CD4-positive, alpha-beta T cell (primary cell): ENCODE measurements at regions of chr10 and their contacts with region 1.

Region 1: GRCh38 chr10:101031128-101031795 is at the starts of genes PDZD7 and SFXN3:
- DNase-seq: peak; percentile 94 to 98 (median 97)
- ATAC-seq: peak; percentile 76
- H3K4me3 ChIP-seq: peak within 1 kb of the TSS; percentile 99
- H3K4me3 Mint-ChIP-seq: peak within 1 kb of the TSS; percentile 95
- H3K27ac ChIP-seq: peak within 1 kb of the TSS; percentile 93 to 97
- H3K27ac Mint-ChIP-seq: peak within 1 kb of the TSS; percentile 97
- H3K4me1 ChIP-seq: peaks cover 38% of the 10 kb centered on the region
- H3K4me1 Mint-ChIP-seq: peaks cover 19% of the 10 kb centered on the region
- H3K27me3 ChIP-seq: no peaks in the 10 kb centered on the region
- H3K27me3 Mint-ChIP-seq: no peaks in the 10 kb centered on the region
- CTCF ChIP-seq: no peak
- total RNA-seq, gene PDZD7: 1.7 to 3.1 TPM
- total RNA-seq, gene SFXN3: 43.2 to 48.3 TPM

Region 2: DNA sequence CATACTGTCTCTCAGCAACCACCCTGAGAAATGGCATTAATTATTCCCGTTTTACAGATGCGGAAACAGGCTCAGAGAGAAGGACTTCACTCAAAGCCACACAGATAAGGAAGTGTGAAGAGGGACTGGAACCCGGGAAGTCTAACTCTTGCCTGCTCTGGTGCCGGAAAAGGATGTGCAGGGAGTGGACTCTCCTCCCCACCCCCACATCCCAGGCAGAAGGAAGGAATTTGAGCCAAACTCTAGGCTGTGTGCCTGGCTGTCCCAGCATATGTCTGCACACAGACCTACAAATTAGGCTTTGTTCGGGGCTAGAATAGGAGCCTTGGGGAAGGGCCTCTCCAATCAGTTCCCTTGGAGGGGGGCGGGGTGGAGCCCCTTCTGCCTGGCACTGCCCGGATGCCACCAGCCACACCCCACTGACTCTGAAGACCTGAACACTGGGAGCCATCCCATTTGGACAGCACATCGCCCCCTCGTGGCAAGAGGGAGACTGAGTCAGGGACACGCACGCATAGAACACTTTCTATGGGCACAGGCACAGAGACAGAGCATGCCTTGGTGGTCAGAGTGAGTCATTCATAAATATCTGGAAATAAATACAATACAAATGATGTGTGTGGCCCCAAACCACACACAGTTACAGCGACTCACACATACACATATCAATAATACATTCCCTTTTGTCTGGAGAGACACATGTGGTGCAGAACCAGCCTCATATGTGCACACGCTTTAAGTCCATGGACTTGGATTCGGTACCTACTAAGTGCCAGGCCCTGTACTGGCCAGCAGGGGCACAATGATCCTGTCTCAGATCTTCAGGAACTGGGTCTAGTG is 18.5 kb before region 1 on chr10:
- CTCF ChIA-PET with region 1: interaction called, 11 read pairs
- POLR2A ChIA-PET with region 1: interaction called, 4 read pairs
- intact Hi-C with region 1: no loop called
- DNase-seq: peak; percentile 60 to 86 (median 70)
- ATAC-seq: peak; percentile 88
- H3K4me3 ChIP-seq: no peak overlapping the region
- H3K4me3 Mint-ChIP-seq: no peak overlapping the region
- H3K27ac ChIP-seq: no peak overlapping the region
- H3K27ac Mint-ChIP-seq: no peak overlapping the region
- H3K4me1 ChIP-seq: peaks cover 19% of the 10 kb centered on the region
- H3K4me1 Mint-ChIP-seq: peaks cover 16% of the 10 kb centered on the region
- H3K27me3 ChIP-seq: peaks cover 20 to 21% of the 10 kb centered on the region in 2 experiments
- H3K27me3 Mint-ChIP-seq: peaks cover 40% of the 10 kb centered on the region
- CTCF ChIP-seq: peak; percentile 87

Region 3: GRCh38 chr10:101042667-101043355 is 11.5 kb after region 1 on chr10:
- CTCF ChIA-PET with region 1: interaction called, 28 read pairs
- POLR2A ChIA-PET with region 1: interaction called, 48 read pairs
- intact Hi-C with region 1: no loop called
- DNase-seq: peak; percentile 58 to 93 (median 77)
- ATAC-seq: peak; percentile 74
- H3K4me3 ChIP-seq: peak overlapping the region; percentile 66
- H3K4me3 Mint-ChIP-seq: peak overlapping the region; percentile 95
- H3K27ac ChIP-seq: peak overlapping the region in 1 of 2 donors; percentile 39
- H3K27ac Mint-ChIP-seq: peak overlapping the region; percentile 76
- H3K4me1 ChIP-seq: peaks cover 24% of the 10 kb centered on the region
- H3K4me1 Mint-ChIP-seq: peaks cover 26% of the 10 kb centered on the region
- H3K27me3 ChIP-seq: peaks cover 10 to 15% of the 10 kb centered on the region in 2 experiments
- H3K27me3 Mint-ChIP-seq: peaks cover 17% of the 10 kb centered on the region
- CTCF ChIP-seq: no peak

Region 4: DNA sequence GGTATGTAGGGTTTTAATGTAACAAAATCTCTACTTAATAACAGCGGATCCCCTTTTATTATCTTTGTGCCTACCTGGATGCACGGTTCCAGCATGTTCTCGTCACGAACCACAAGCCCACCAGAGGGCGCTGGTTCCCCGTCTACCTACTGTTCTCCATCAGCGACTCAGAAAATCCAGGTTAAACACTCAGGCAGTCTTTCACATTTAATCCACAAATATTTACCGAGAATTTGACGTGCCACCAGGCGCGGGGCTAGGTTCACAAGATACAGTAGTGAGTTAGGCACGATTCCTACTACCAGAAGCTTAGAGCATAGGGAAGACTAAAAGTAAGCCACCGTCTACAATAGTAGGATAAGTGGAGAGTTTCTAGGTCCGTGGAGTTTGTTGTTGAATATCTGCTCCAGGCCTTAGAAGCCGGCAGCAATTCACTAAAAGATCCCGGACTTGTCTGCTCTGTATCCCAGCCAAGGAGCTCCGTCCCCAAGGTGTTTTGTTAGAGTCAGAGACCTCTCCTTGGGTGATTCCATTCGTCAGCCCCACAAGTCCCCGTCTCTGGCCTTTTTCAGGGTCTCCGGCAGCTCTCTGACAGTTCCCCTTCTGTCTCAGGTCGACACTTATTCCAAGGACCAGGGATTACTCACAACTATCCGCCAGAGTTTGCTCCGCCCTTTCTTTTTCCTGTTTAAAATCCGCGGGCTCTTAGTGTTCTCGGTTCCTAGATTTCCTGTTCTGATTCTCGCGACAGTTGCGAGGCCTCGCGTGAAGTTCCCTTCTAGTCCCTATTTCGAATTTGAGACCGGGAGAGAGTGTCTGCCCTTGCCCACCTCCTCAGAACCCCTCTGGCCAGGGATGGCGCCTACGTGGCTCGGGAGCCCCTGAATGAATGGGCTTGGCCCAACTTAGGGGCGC is 29.0 kb after region 1 on chr10:
- CTCF ChIA-PET with region 1: interaction called, 4 read pairs
- POLR2A ChIA-PET with region 1: interaction called, 15 read pairs
- intact Hi-C with region 1: loop called (anchors 5 kb)
- DNase-seq: peak; percentile 79 to 95 (median 90)
- ATAC-seq: peak; percentile 70
- H3K4me3 ChIP-seq: peak overlapping the region; percentile 85
- H3K4me3 Mint-ChIP-seq: peak overlapping the region; percentile 95
- H3K27ac ChIP-seq: peak overlapping the region; percentile 88 to 91
- H3K27ac Mint-ChIP-seq: peak overlapping the region; percentile 81
- H3K4me1 ChIP-seq: peaks cover 40% of the 10 kb centered on the region
- H3K4me1 Mint-ChIP-seq: peaks cover 31% of the 10 kb centered on the region
- H3K27me3 ChIP-seq: peaks cover 27% of the 10 kb centered on the region in 2 experiments
- H3K27me3 Mint-ChIP-seq: peaks cover 20% of the 10 kb centered on the region
- CTCF ChIP-seq: peak; percentile 98